Activated CD8-positive, alpha-beta T cell treated with anti-CD3 and anti-CD28 coated beads for 36 hours (primary cell): ENCODE measurements at regions of chr16 and their contacts with region 1.

Region 1: DNA sequence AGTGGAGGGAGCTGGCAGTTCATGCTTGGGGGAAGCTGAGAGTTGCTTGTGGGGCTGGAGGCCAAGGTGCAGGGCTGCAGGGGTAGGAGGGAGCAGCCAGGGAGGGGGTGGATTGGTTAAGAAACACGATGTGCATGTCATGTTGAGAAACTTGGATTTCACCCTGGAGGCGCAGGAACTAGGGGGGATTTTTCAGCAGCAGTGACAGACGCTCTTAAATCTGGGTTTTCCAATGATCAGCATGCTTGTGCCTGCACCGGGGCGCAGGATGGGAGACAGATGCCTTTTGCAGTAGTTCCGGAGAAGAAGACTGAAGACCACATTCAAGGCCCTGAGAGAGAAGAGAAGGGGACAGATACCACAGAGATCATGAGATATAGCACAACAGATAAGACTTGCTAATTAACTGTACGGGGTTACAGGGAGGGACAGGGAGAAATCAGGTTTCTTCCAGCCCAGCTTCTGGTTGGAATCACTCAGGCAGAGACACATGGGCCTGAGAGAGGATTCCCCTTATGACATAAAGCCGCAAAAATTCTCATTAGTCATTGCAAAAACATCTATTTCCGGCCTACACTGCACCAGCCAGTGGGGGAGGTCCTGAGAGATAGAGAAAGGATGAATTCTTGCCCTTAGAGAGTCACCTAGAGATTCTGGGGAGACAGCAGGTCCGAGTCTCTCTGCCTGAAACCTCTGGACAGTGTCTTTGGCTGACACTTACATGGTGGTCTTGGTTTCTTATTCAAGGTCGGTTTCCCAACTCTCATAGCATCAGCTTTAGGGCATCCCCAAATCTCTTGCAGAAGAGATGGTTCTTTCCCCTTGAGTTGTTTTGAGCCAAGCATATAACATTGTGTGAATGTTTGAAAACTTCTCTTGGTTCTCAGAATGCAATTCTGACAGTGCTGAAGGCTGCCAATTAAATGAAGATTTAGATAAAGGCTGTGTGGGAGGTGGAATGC is 27.1 kb downstream of the CDH13 start:
- DNase-seq: peak; percentile 71
- ATAC-seq: peak; percentile 65
- H3K4me3 Mint-ChIP-seq: peak overlapping the region; percentile 51
- H3K27ac Mint-ChIP-seq: peak overlapping the region; percentile 93
- H3K4me1 Mint-ChIP-seq: peaks cover 86% of the 10 kb centered on the region
- H3K27me3 Mint-ChIP-seq: peaks cover 2% of the 10 kb centered on the region
- CTCF ChIP-seq: no peak

Region 2: DNA sequence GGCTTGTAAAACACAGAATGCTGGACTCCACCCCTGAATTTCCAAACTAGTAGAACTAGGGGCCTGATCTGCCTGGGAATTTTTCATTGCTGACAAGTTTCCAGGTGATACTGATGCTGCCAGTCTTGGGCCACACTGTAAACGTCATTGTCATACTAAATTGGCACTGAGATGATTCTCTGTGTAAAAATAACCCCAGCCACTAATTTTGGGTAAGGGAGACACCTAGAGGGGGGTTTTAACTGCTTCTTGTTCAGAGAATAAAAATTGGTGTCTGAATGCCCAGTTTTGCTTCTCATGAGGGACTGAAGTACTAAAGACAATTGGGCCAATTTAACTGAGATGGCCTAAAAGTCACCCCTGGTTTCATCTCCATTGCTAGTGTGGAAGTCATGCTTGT is 32.0 kb before region 1 on chr16:
- CTCF ChIA-PET with region 1: no interaction called
- POLR2A ChIA-PET with region 1: no interaction called
- intact Hi-C with region 1: no loop called
- DNase-seq: no peak
- ATAC-seq: no peak
- H3K4me3 Mint-ChIP-seq: no peak overlapping the region
- H3K27ac Mint-ChIP-seq: no peak overlapping the region
- H3K4me1 Mint-ChIP-seq: no peaks in the 10 kb centered on the region
- H3K27me3 Mint-ChIP-seq: peaks cover 22% of the 10 kb centered on the region
- CTCF ChIP-seq: no peak

Region 3: DNA sequence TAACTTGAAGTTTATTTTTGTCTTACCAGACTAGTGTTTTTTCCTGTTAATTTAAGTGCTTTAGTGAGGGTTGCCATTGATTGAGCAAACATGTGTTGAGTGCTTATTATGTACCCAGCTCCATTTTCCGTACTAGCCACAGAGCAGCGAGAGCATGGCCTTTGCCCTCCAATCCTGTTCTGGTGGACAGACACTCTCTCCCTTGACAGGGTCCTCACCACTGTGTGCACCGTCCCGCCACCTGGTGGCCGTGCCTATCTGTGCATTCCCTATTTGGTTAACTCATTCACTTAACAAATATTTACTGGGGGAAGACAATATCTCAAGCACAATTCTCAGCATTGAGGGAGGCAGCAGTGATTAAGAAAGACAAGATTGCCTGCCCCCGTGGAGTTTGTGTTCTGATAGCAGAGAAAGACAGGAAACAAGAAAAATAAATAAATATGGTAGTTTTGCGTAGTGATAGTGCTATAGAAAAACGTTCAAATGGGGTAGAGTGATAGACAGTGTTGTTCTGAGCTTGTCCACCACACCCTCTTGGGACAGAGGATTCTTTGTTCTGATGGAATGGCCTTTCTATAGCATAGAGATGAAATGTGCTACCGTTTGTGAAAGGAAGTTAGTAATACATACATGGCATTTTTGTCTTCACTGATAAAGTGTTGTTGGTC is 14.0 kb before region 1 on chr16:
- CTCF ChIA-PET with region 1: interaction called, 51 read pairs
- POLR2A ChIA-PET with region 1: interaction called, 4 read pairs
- intact Hi-C with region 1: no loop called
- DNase-seq: peak; percentile 78
- ATAC-seq: peak; percentile 69
- H3K4me3 Mint-ChIP-seq: no peak overlapping the region
- H3K27ac Mint-ChIP-seq: no peak overlapping the region
- H3K4me1 Mint-ChIP-seq: peaks cover 15% of the 10 kb centered on the region
- H3K27me3 Mint-ChIP-seq: peaks cover 6% of the 10 kb centered on the region
- CTCF ChIP-seq: peak; percentile 82

Region 4: DNA sequence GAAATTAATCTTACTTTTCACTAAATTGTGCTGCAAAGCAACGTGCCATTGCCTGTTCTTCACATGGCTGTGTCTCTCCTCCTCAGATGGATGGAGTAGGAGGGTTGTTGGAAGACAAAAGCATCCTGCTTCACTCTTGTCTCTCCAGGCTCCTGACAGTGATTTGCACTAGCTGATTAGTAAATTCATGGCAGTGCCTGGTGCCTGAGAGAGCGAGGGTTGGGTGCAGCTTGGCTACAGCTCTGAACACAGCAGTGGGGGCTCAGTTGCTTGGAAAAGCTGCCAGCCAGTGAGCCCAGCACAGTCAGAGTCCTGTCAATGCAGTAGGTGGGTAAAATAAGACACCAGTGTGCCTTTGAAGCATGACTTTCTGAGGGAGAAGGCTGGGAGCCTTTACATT is 10.3 kb after region 1 on chr16:
- CTCF ChIA-PET with region 1: no interaction called
- POLR2A ChIA-PET with region 1: no interaction called
- intact Hi-C with region 1: no loop called
- DNase-seq: no peak
- ATAC-seq: no peak
- H3K4me3 Mint-ChIP-seq: no peak overlapping the region
- H3K27ac Mint-ChIP-seq: no peak overlapping the region
- H3K4me1 Mint-ChIP-seq: peaks cover 12% of the 10 kb centered on the region
- H3K27me3 Mint-ChIP-seq: no peaks in the 10 kb centered on the region
- CTCF ChIP-seq: no peak

Region 5: DNA sequence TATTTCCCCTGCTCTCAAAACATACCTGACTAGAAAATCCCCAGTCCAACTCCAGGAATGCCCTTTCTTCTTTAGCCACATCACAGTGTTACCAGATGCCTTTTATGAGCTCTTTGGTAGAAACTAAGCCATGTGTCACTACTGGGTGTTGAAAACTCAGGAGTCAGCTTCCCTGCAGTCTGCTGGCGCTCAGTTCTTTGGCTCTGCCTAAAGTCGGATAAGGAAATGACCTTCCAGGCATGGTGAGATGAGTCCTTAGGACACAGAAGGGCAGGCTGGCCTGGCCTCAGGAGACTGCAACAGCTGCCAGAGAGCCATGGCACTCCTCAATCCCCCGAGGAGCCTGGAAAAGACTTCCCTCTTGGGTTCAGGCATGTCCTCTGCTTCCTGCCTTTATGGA is 62.0 kb after region 1 on chr16:
- CTCF ChIA-PET with region 1: no interaction called
- POLR2A ChIA-PET with region 1: no interaction called
- intact Hi-C with region 1: no loop called
- DNase-seq: no peak
- ATAC-seq: no peak
- H3K4me3 Mint-ChIP-seq: no peak overlapping the region
- H3K27ac Mint-ChIP-seq: no peak overlapping the region
- H3K4me1 Mint-ChIP-seq: no peaks in the 10 kb centered on the region
- H3K27me3 Mint-ChIP-seq: peaks cover 1% of the 10 kb centered on the region
- CTCF ChIP-seq: no peak